Activated T-helper 1 cell treated with anti-CD3 and anti-CD28 coated beads, Interleukin-12 subunit alpha, Interleukin-12 subunit beta, Interleukin-2, Interleukin-4 antibody, amounts not matched to agents 30 ng/mL and 10 ng/mL and 1 ng/mL, durations not matched to agents 14 hours and 24 hours and 36 hours (primary cell): ENCODE measurements at regions of chr16 and their contacts with region 1.

Region 1: GRCh38 chr16:83807710-83808572 is at the start of gene HSBP1:
- DNase-seq: peak; percentile 91
- H3K4me3 Mint-ChIP-seq: peak within 1 kb of the TSS; percentile 98
- H3K27ac Mint-ChIP-seq: peak within 1 kb of the TSS; percentile 95
- H3K4me1 Mint-ChIP-seq: peaks cover 30% of the 10 kb centered on the region
- H3K27me3 Mint-ChIP-seq: peaks cover 2% of the 10 kb centered on the region
- total RNA-seq, gene HSBP1: 112 and 115 TPM in 2 replicates

Region 2: DNA sequence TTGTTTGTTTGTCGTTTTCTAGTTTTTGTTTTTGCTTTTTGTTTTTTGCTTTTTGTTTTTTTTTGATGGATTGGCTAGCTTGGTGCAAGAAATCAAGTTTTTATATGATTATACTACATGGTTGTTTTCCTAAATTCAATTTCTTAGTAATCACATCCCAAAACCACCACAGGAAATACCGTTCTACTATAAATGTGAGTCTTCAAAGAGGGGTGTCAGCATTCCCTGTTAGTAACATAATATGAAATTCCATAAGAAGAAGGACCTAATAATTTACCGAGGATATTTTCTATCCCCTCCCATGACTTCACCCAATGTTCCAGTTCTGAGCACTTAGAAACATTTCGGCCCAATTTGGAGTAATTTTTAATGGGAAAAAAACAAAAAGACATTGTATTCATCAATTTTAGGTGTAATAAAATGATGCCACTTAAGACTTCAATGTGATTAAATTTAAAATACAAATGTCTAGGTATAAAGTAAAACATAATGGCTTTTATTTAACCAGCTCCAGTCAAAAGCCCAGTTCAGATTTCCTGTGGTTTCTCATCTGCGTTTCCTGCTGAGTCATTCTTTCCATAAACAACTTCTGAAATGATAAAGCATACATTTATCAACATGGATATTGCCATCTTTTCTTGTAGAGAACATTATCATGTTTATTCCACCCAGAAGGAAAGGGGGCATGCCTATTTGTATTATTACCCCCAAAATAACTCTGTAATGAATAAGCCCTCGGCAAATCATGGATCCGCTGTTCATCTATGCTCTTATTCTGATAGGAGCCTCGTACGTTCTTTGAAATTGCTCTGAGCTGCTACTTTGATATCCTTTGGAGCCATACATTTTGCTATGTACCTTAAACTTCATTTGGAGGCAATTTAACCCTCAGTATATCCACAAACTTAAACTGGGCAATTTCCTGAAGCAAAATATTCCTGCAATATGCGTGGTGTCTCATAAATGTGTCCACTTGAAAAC is 27.9 kb after region 1 on chr16:
- intact Hi-C with region 1: loop called (anchors 1 kb)
- DNase-seq: peak; percentile 11
- H3K4me3 Mint-ChIP-seq: no peak overlapping the region
- H3K27ac Mint-ChIP-seq: peak overlapping the region; percentile 43
- H3K4me1 Mint-ChIP-seq: peaks cover 17% of the 10 kb centered on the region
- H3K27me3 Mint-ChIP-seq: peaks cover 46% of the 10 kb centered on the region

Region 3: GRCh38 chr16:84116720-84117493 is 309.0 kb after region 1 on chr16 and contains the start of gene MBTPS1:
- intact Hi-C with region 1: loop called (anchors 2 kb)
- DNase-seq: peak; percentile 98
- H3K4me3 Mint-ChIP-seq: peak within 1 kb of the TSS; percentile 92
- H3K27ac Mint-ChIP-seq: peak within 1 kb of the TSS; percentile 95
- H3K4me1 Mint-ChIP-seq: peaks cover 22% of the 10 kb centered on the region
- H3K27me3 Mint-ChIP-seq: no peaks in the 10 kb centered on the region
- total RNA-seq, gene MBTPS1: 54.5 and 60.0 TPM in 2 replicates

Region 4: GRCh38 chr16:84186685-84187437 is 378.9 kb after region 1 on chr16 and contains the start of gene TAF1C:
- intact Hi-C with region 1: loop called (anchors 5 kb)
- DNase-seq: peak; percentile 86
- H3K4me3 Mint-ChIP-seq: peak within 1 kb of the TSS; percentile 95
- H3K27ac Mint-ChIP-seq: peak within 1 kb of the TSS; percentile 89
- H3K4me1 Mint-ChIP-seq: peaks cover 6% of the 10 kb centered on the region
- H3K27me3 Mint-ChIP-seq: no peaks in the 10 kb centered on the region
- total RNA-seq, gene TAF1C: 67.9 and 74.4 TPM in 2 replicates

Region 5: GRCh38 chr16:85799497-85800337 is 1991.8 kb after region 1 on chr16 and contains the starts of genes COX4I1 and EMC8:
- intact Hi-C with region 1: loop called (anchors 5 kb)
- DNase-seq: peak; percentile 93
- H3K4me3 Mint-ChIP-seq: peak within 1 kb of the TSS; percentile 92
- H3K27ac Mint-ChIP-seq: peak within 1 kb of the TSS; percentile 96
- H3K4me1 Mint-ChIP-seq: peaks cover 57% of the 10 kb centered on the region
- H3K27me3 Mint-ChIP-seq: no peaks in the 10 kb centered on the region
- total RNA-seq, gene COX4I1: 544 and 558 TPM in 2 replicates
- total RNA-seq, gene EMC8: 49.5 and 51.1 TPM in 2 replicates